BJ (cell line): ENCODE measurements at regions of chr16 and their contacts with region 1.

Region 1: GRCh38 chr16:84738255-84739038 is 38.6 kb downstream of the USP10 start:
- DNase-seq: no peak
- H3K4me3 ChIP-seq: no peak overlapping the region
- H3K27me3 ChIP-seq: no peaks in the 10 kb centered on the region
- CTCF ChIP-seq: peak; percentile 87

Region 2: GRCh38 chr16:84484579-84485254 is 253.7 kb before region 1 on chr16:
- CTCF ChIA-PET with region 1: no interaction called
- POLR2A ChIA-PET with region 1: no interaction called
- DNase-seq: no peak
- H3K4me3 ChIP-seq: no peak overlapping the region
- H3K27me3 ChIP-seq: no peaks in the 10 kb centered on the region
- CTCF ChIP-seq: peak; percentile 74

Region 3: DNA sequence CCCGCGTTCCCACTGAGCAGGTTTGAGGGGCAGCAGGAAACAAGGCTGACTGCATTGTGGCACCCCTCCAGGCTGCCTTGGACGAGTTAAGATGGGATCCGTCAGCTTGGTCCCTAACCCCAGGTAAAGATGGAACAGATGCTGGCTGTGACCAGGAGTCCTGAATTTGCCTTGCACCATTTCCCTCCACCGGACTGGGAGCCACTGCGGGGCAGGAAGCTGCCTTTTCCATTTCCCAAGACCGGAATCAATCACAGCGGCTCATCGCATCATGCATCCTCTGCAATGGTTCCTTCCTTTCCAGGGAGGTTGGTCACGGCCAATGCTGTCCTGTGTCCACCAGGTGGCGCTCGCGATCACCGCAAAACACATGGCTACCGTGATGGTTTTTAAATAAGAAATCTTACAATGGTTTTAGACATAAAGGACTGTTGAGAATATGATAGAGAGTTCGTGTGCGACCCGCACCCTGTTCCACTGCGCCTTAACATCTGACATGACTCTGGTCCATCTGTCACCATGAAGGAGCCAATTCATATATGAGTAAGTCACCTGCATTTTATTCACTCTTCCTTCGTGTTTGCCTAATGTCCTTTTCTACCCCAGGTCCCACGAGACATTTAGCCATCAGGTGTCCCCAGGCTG is 227.1 kb before region 1 on chr16:
- CTCF ChIA-PET with region 1: interaction called, 11 read pairs
- POLR2A ChIA-PET with region 1: no interaction called
- DNase-seq: peak; percentile 46
- H3K4me3 ChIP-seq: no peak overlapping the region
- H3K27me3 ChIP-seq: no peaks in the 10 kb centered on the region
- CTCF ChIP-seq: peak; percentile 89

Region 4: GRCh38 chr16:84607694-84608093 is 130.8 kb before region 1 on chr16:
- CTCF ChIA-PET with region 1: no interaction called
- POLR2A ChIA-PET with region 1: no interaction called
- DNase-seq: no peak
- H3K4me3 ChIP-seq: no peak overlapping the region
- H3K27me3 ChIP-seq: no peaks in the 10 kb centered on the region
- CTCF ChIP-seq: no peak

Region 5: GRCh38 chr16:84647828-84648594 is 90.4 kb before region 1 on chr16 and contains the start of gene KLHL36:
- CTCF ChIA-PET with region 1: interaction called, 10 read pairs
- POLR2A ChIA-PET with region 1: no interaction called
- DNase-seq: no peak
- H3K4me3 ChIP-seq: peak within 1 kb of the TSS; percentile 82
- H3K27me3 ChIP-seq: no peaks in the 10 kb centered on the region
- CTCF ChIP-seq: no peak
- polyA plus RNA-seq, gene KLHL36: 33.2 and 43.7 TPM in 2 replicates

Region 6: DNA sequence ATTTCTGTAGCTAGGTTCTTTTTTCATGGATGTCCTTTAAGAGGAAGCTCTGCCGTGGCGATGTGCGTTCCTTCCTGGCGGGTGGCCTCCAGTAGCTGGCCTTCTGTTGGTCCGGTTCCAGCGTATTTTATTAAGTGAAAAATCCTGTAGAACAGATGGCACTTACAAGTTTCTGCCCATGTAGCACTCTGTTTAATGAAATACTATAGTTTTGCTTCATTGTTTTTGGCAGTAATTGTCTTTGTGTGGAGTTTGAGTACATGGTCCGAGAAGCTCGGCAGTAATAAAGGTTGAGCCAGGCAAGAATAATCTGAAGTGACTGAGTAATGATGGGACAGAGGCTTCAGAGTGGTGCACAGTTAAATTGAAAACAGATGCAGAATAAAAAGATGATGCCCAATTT is 18.3 kb before region 1 on chr16:
- CTCF ChIA-PET with region 1: interaction called, 37 read pairs
- POLR2A ChIA-PET with region 1: no interaction called
- DNase-seq: no peak
- H3K4me3 ChIP-seq: no peak overlapping the region
- H3K27me3 ChIP-seq: no peaks in the 10 kb centered on the region
- CTCF ChIP-seq: no peak

Region 7: DNA sequence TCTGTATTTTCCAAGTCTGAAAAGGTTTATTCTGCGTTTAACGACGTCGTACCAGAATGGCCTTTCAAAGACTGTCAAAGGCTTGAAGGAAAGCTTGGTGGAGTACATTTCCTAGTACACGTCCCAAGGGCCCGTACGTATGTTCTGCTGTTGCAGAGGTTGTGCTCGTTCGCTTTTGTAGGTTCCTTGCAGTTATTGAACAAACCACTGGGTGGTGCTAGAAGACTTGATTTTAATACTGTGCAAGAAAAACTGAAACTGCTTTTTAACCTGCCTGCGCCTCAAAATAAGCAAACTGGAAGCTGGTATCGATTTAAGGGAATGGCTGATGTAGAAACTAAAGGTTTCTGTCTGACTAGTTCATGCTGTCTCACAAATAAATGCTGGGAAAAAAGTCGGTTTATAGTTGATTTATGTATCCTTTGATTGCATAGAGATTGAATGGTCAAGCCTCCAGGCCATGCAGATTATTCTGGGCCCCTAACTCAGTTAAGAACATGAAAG is 16.0 kb after region 1 on chr16:
- CTCF ChIA-PET with region 1: interaction called, 25 read pairs
- POLR2A ChIA-PET with region 1: no interaction called
- DNase-seq: peak; percentile 41
- H3K4me3 ChIP-seq: no peak overlapping the region
- H3K27me3 ChIP-seq: no peaks in the 10 kb centered on the region
- CTCF ChIP-seq: peak; percentile 72

Region 8: DNA sequence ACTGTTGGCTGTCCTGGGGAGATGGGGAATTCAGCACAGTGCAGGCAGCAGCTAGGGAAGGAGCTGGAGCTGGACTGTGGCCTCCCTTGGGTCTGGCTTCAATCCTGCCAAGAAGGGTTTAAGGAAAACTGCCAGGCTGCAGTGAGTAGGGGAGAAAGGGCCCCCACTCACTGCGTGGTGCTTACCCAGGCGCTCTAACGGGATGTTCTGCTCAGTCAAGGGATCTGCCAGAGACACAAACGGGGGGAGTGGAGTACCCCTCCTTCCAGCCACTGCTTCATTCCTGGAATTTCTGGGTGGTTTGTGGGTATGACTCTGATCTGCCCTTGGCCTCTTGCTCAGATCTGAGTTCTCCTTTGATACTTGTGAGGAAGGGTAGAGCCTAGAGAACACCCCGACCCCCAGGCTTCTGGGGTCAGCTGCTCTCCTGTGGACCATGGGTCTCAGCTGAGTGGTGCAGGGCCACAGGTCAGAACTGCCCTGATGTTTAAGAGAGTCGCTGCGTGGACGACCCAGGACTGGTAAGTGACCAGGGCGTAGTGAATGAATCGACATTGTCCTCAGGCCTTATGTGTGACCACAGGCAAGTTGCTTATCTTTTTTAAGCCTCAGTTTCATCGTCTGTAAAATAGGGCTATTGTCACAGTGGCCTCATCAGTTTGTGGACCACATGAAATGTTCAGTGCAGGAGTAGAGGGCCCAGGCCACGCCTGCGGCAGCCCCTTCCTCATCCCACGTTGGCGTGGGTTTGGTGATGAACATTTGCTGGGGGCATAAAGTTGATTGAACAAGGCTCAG is 90.9 kb after region 1 on chr16:
- CTCF ChIA-PET with region 1: no interaction called
- POLR2A ChIA-PET with region 1: no interaction called
- DNase-seq: peak; percentile 70
- H3K4me3 ChIP-seq: no peak overlapping the region
- H3K27me3 ChIP-seq: no peaks in the 10 kb centered on the region
- CTCF ChIP-seq: no peak